Activated CD4-positive, alpha-beta T cell treated with anti-CD3 and anti-CD28 coated beads for 36 hours (primary cell): ENCODE measurements at regions of chr3 and their contacts with region 1.

Region 1: GRCh38 chr3:33440323-33441232 is at the start of gene UBP1:
- DNase-seq: peak; percentile 99
- ATAC-seq: peak; percentile 88
- H3K4me3 Mint-ChIP-seq: peak within 1 kb of the TSS; percentile 95
- H3K27ac Mint-ChIP-seq: peak within 1 kb of the TSS; percentile 100
- H3K4me1 Mint-ChIP-seq: peaks cover 35% of the 10 kb centered on the region
- H3K27me3 Mint-ChIP-seq: no peaks in the 10 kb centered on the region
- total RNA-seq, gene UBP1: 54.8 to 66.0 TPM

Region 2: GRCh38 chr3:32570421-32571191 is 870.0 kb before region 1 on chr3 and contains the start of gene DYNC1LI1:
- CTCF ChIA-PET with region 1: no interaction called
- POLR2A ChIA-PET with region 1: no interaction called
- intact Hi-C with region 1: loop called in 1 of 2 experiments (anchors 5 kb)
- DNase-seq: peak; percentile 96
- ATAC-seq: peak; percentile 96
- H3K4me3 Mint-ChIP-seq: peak within 1 kb of the TSS; percentile 78
- H3K27ac Mint-ChIP-seq: peak within 1 kb of the TSS; percentile 90
- H3K4me1 Mint-ChIP-seq: peaks cover 28% of the 10 kb centered on the region
- H3K27me3 Mint-ChIP-seq: no peaks in the 10 kb centered on the region
- total RNA-seq, gene DYNC1LI1: 31.8 to 31.9 TPM

Region 3: DNA sequence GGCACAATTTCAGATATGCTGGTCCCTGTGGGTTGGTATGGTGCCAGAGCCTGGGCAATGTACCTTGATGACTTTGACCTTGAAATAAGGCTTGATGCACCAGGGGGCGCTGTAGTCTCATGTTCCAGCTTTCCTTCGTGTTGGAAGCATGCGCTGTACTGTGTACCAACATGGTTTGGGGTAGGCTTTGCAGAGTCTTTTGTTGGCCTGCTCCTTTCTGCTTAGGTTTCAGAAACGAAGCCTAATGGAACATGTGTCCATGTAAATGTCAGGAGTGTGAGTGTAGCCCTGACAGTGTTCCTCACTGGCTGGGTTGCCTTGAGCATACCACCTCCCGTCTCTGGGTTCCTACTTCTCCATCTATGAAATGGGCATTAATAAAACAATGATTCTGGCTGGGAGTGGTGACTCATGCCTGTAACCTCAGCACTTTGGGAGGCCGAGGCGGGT is 492.8 kb before region 1 on chr3:
- CTCF ChIA-PET with region 1: interaction called, 3 read pairs
- POLR2A ChIA-PET with region 1: no interaction called
- intact Hi-C with region 1: loop called in 1 of 2 experiments (anchors 5 kb)
- DNase-seq: peak; percentile 97
- ATAC-seq: peak; percentile 72
- H3K4me3 Mint-ChIP-seq: no peak overlapping the region
- H3K27ac Mint-ChIP-seq: no peak overlapping the region
- H3K4me1 Mint-ChIP-seq: peaks cover 49% of the 10 kb centered on the region
- H3K27me3 Mint-ChIP-seq: no peaks in the 10 kb centered on the region

Region 4: DNA sequence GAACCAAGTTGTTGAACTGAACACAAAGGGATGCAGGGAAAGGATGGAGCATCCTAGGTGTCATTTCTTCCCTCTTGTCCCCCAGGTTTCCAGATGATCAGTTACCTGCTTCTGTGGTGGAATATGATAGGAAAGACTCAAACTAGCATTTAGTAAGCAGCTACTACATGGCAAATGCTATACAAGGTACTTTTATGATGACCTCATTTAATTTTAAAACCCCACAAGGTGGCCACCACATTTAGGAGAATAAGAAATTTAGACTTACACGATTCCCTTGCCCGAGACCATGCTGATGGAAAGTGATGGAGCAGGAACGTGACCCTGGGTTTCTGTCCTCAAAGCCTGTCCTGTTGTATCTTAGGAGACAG is 448.3 kb before region 1 on chr3:
- CTCF ChIA-PET with region 1: no interaction called
- POLR2A ChIA-PET with region 1: no interaction called
- intact Hi-C with region 1: loop called in 1 of 2 experiments (anchors 2 kb)
- DNase-seq: no peak
- ATAC-seq: peak; percentile 6
- H3K4me3 Mint-ChIP-seq: peak overlapping the region; percentile 62
- H3K27ac Mint-ChIP-seq: peak overlapping the region; percentile 95
- H3K4me1 Mint-ChIP-seq: peaks cover 80% of the 10 kb centered on the region
- H3K27me3 Mint-ChIP-seq: peaks cover 2% of the 10 kb centered on the region

Region 5: GRCh38 chr3:33113772-33114621 is 326.6 kb before region 1 on chr3 and contains the start of gene CRTAP:
- CTCF ChIA-PET with region 1: no interaction called
- POLR2A ChIA-PET with region 1: no interaction called
- intact Hi-C with region 1: loop called (anchors 1 to 10 kb)
- DNase-seq: peak; percentile 93
- ATAC-seq: peak; percentile 87
- H3K4me3 Mint-ChIP-seq: peak within 1 kb of the TSS; percentile 77
- H3K27ac Mint-ChIP-seq: peak within 1 kb of the TSS; percentile 73
- H3K4me1 Mint-ChIP-seq: peaks cover 47% of the 10 kb centered on the region
- H3K27me3 Mint-ChIP-seq: no peaks in the 10 kb centered on the region
- total RNA-seq, gene CRTAP: 39.2 to 43.4 TPM

Region 6: DNA sequence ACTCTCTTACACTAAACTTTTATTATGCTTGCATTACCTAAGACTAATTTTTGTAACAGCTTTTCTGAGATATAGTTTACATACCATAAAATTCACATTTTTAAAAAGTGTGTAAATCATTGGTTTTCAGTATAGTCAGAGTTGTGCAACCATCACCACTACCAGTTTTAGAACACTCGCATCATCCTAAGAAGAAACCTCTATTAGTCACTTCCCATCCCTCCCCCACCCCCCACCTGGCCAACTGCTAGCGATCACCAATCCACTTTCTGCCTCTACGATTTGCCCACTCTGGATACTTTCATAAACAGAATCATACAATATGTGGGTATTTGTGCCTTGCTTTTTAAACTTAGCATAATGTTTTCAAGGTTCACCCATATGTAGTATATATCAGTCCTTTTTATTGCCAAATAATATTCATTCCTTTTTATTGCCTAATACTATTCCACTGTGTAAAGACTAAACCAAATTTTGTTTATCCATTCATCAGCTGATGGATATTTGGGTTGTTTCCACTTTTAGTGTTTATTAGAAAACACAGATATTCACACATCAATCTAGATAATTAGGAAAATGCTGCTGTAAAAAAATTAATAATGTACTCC is 23.4 kb before region 1 on chr3:
- CTCF ChIA-PET with region 1: interaction called, 3 read pairs
- POLR2A ChIA-PET with region 1: no interaction called
- intact Hi-C with region 1: loop called in 1 of 2 experiments (anchors 2 kb)
- DNase-seq: peak; percentile 67
- ATAC-seq: peak; percentile 85
- H3K4me3 Mint-ChIP-seq: no peak overlapping the region
- H3K27ac Mint-ChIP-seq: peak overlapping the region; percentile 68
- H3K4me1 Mint-ChIP-seq: peaks cover 28% of the 10 kb centered on the region
- H3K27me3 Mint-ChIP-seq: no peaks in the 10 kb centered on the region

Region 7: DNA sequence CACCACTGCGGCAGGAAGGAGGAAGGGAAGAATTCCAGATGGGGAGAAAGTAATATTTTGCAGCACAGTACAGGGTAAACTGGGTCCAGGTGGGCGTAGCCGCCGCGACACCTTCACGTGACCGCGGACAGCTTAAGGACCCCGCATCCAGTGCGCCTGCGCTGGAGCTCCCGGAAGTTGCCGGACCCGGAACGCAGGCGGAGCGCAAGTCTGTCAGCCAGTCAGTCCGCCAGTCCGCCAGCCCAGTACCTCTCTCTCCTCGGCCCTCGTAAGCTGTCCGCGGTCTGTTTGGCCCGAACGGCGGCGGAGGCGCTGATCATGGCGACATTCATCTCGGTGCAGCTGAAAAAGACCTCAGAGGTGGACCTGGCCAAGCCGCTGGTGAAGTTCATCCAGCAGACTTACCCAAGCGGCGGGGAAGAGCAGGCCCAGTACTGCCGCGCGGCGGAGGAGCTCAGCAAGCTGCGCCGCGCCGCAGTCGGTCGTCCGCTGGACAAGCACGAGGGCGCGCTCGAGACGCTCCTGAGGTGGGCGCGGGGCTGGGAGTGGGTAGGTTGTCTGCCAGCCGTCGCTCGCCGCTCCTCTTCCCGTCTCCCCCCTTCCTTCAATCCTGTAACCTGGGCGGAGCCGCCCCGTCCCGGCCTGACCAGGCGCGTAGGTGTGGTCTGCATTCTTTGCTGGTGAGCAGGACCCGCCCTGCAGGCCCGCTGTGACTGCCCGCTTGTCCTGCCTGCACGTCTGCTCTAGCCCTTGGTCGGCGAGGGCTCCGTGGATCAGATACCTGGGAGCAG is 358.0 kb after region 1 on chr3 and contains the start of gene PDCD6IP:
- CTCF ChIA-PET with region 1: no interaction called
- POLR2A ChIA-PET with region 1: interaction called, 8 read pairs
- intact Hi-C with region 1: loop called (anchors 1 to 2 kb)
- DNase-seq: peak; percentile 93
- ATAC-seq: peak; percentile 88
- H3K4me3 Mint-ChIP-seq: peak within 1 kb of the TSS; percentile 82
- H3K27ac Mint-ChIP-seq: peak within 1 kb of the TSS; percentile 95
- H3K4me1 Mint-ChIP-seq: peaks cover 51% of the 10 kb centered on the region
- H3K27me3 Mint-ChIP-seq: no peaks in the 10 kb centered on the region
- total RNA-seq, gene PDCD6IP: 141 to 150 TPM